ENCODE measurements at regions of chr10 and their contacts with region 1.

Region 1: DNA sequence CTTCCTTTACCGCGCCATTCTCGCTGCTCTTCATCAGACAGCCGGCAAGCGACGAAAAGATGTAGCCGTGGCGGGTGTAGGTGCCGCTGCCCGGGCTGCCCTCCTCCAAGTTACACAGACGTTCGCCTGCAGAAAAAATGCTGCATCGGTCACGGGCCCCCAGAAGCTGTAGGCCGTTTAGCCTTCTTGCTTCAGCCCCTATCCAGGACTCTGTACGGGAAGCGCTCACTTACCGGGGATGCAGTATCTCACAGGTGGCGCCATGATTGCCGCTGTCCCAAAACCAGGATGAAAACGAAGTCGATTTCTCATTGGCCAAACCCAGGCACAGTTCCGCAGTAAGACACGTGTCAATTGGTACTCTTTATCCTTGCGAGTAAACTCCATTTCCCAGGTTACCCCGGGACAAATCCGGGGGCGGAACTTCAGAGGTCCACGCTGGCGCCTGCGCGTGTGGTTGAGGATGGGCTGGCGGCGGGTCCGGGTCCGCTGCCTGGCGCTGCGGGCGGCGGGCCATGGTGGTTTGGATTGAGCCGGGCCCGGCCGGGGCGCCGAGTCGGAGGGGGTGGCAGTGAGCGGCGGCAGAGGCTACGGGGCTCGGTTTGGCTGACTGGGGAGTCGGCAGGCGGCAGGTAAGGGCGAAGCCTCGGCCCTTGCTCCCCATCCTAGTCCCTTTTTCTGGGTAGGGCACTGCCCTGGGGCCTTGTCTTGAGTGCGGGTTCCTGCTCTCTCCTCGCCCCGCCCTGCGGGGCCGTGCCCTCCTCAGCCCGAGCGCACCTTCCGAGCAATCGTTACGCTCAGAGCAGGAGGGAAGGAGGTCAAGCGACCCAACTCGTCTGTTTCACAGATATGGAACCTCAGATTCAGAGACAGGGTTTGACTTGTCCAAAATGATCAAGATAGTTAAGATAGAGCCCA is at the starts of genes EXOSC1 and ZDHHC16:
- DNase-seq: peak; percentile 97
- ATAC-seq: peak; percentile 95
- H3K4me3 ChIP-seq: peak within 1 kb of the TSS; percentile 83 to 99 (median 93)
- H3K27ac ChIP-seq: peak within 1 kb of the TSS; percentile 60
- H3K4me1 ChIP-seq: peaks cover 43% of the 10 kb centered on the region
- H3K27me3 ChIP-seq: no peaks in the 10 kb centered on the region; a peak in 1 of 5 replicates
- CTCF ChIP-seq: peak; percentile 42
- EP300 ChIP-seq: no peak; a peak in 1 of 4 replicates
- POLR2A ChIP-seq: peak; percentile 73 to 84
- RAD21 ChIP-seq: peak; percentile 3; the same call in 1 of the 2 replicates
- total RNA-seq, gene EXOSC1: 39.9 and 47.6 TPM in 2 replicates
- total RNA-seq, gene ZDHHC16: 30.2 and 41.8 TPM in 2 replicates

Region 2: GRCh38 chr10:97425964-97426775 is 19.8 kb before region 1 on chr10 and contains the start of gene PGAM1:
- CTCF ChIA-PET with region 1: no interaction called
- POLR2A ChIA-PET with region 1: interaction called, 4 read pairs
- in situ Hi-C with region 1: no loop called
- intact Hi-C with region 1: loop called (anchors 2 kb)
- DNase-seq: peak; percentile 89
- ATAC-seq: peak; percentile 83
- H3K4me3 ChIP-seq: peak within 1 kb of the TSS; percentile 86 to 98 (median 96)
- H3K27ac ChIP-seq: peak within 1 kb of the TSS; percentile 89
- H3K4me1 ChIP-seq: peaks cover 46% of the 10 kb centered on the region
- H3K27me3 ChIP-seq: no peaks in the 10 kb centered on the region; a peak in 1 of 5 replicates
- CTCF ChIP-seq: peak; percentile 96
- EP300 ChIP-seq: 0 out of 4 replicates have a peak, but pooled peaks of 1 of the 2 experiments have one; percentile 30
- POLR2A ChIP-seq: peak; percentile 67 to 81
- RAD21 ChIP-seq: peak; percentile 26
- total RNA-seq, gene PGAM1: 354 and 442 TPM in 2 replicates

Region 3: DNA sequence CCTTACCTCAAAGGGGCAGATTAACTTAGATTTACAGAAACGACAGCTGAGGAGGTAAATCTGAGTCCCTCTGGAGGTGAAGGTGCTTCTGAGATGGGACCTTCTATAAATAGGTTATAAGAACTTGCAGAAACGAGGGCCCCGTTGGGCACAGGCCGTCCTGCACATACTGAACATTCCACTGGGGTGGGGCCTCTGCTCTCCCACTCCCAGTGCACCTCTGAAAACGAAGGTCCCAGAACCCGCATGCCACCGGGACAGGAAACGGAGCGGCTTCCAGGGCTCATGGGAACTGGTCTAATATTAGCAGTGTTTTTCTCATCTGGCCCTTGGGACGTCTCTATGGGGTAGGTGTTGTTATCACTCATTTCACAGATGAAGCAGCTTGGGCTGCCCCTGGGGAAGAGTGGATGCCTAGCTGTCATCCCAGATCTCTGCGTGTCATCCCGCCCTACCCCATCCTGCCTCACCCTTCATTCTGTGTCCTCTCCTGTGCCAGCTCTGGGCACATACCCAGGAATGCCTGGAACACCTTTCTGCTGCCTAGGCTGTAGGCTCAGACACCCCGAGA is 163.1 kb after region 1 on chr10:
- CTCF ChIA-PET with region 1: no interaction called
- POLR2A ChIA-PET with region 1: no interaction called
- in situ Hi-C with region 1: no loop called
- intact Hi-C with region 1: no loop called
- DNase-seq: no peak
- ATAC-seq: no peak
- H3K4me3 ChIP-seq: no peak overlapping the region
- H3K27ac ChIP-seq: no peak overlapping the region
- H3K4me1 ChIP-seq: no peaks in the 10 kb centered on the region
- H3K27me3 ChIP-seq: no peaks in the 10 kb centered on the region
- CTCF ChIP-seq: no peak
- EP300 ChIP-seq: no peak
- POLR2A ChIP-seq: no peak
- RAD21 ChIP-seq: no peak

Region 4: GRCh38 chr10:97914837-97915211 is 468.8 kb after region 1 on chr10:
- CTCF ChIA-PET with region 1: no interaction called
- POLR2A ChIA-PET with region 1: no interaction called
- in situ Hi-C with region 1: no loop called
- intact Hi-C with region 1: no loop called
- DNase-seq: peak; percentile 29
- ATAC-seq: peak; percentile 95
- H3K4me3 ChIP-seq: no peak overlapping the region
- H3K27ac ChIP-seq: no peak overlapping the region
- H3K4me1 ChIP-seq: no peaks in the 10 kb centered on the region
- H3K27me3 ChIP-seq: peaks cover 4 to 19% of the 10 kb centered on the region in 2 experiments; a peak in 2 of 5 replicates
- CTCF ChIP-seq: peak; percentile 94
- EP300 ChIP-seq: no peak
- POLR2A ChIP-seq: no peak
- RAD21 ChIP-seq: peak; percentile 92

Measured in HepG2 (cell line).